Gastrocnemius medialis (tissue), 4 donors: ENCODE measurements at regions of chr7 and their contacts with region 1.

Region 1: GRCh38 chr7:158976849-158977593 is 120.7 kb downstream of the DYNC2I1 start:
- DNase-seq: peak; percentile 34 to 58
- ATAC-seq: peak; percentile 64 to 81
- H3K4me3 ChIP-seq: peak overlapping the region; percentile 27 to 49 (median 36)
- H3K27ac ChIP-seq: peak overlapping the region in 1 of 4 donors; percentile 43
- H3K4me1 ChIP-seq: peaks cover 0 to 4% of the 10 kb centered on the region in 2 donors
- H3K27me3 ChIP-seq: no peaks in the 10 kb centered on the region
- CTCF ChIP-seq: peak; percentile 71 to 80 (median 73)
- POLR2A ChIP-seq: no peak

Region 2: GRCh38 chr7:158646766-158647447 is 330.1 kb before region 1 on chr7:
- in situ Hi-C with region 1: no loop called
- intact Hi-C with region 1: no loop called
- DNase-seq: no peak
- ATAC-seq: no peak
- H3K4me3 ChIP-seq: no peak overlapping the region
- H3K27ac ChIP-seq: no peak overlapping the region
- H3K4me1 ChIP-seq: no peaks in the 10 kb centered on the region
- H3K27me3 ChIP-seq: no peaks in the 10 kb centered on the region
- CTCF ChIP-seq: no peak
- POLR2A ChIP-seq: no peak

Region 3: DNA sequence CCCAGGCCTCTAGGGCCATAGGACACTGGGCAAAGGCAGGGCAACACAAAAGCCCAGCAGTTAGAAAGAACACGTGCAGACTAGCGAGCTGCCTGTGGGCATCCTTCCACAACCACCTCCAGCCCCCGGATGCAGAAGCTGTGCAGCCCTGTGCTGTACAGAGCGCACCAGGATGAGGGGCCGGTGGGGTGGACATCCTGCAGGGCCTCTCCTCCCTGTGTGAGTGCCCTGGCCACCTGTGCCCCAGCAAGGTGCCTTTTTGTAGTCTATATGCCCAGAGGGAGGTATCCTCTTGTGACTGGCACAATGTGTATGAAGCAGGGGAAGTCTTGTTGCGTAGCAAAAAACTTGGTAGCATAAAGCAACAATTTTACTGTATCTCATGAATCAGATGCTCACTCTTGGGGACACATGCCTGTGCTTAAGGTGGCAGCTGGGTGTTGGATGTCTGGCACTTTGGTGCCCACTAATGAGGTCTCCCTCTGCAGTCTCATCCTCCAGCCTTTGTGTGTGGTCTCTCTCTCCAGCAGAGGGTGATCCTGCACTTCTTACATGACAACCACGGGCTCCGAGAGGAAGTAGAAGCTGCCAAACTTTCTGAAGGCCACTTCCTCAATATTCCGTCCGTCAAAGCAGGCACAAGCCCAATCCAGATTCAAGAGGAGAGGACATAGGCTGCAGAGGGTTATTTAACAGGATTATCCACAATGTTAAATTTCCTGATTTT is 281.1 kb before region 1 on chr7:
- in situ Hi-C with region 1: loop called in 1 of 4 experiments (anchors 10 kb)
- intact Hi-C with region 1: loop called (anchors 2 kb)
- DNase-seq: peak; percentile 30 to 69
- ATAC-seq: peak; percentile 60 to 92
- H3K4me3 ChIP-seq: peak overlapping the region in 1 of 4 donors; percentile 33
- H3K27ac ChIP-seq: peak overlapping the region in 1 of 4 donors; percentile 17
- H3K4me1 ChIP-seq: no peaks in the 10 kb centered on the region
- H3K27me3 ChIP-seq: no peaks in the 10 kb centered on the region
- CTCF ChIP-seq: peak in 4 of 5 experiments; percentile 26 to 56 (median 30)
- POLR2A ChIP-seq: no peak

Region 4: GRCh38 chr7:159154243-159154642 is 177.2 kb after region 1 on chr7:
- in situ Hi-C with region 1: no loop called
- intact Hi-C with region 1: no loop called
- DNase-seq: no peak
- ATAC-seq: no peak
- H3K4me3 ChIP-seq: no peak overlapping the region
- H3K27ac ChIP-seq: no peak overlapping the region
- H3K4me1 ChIP-seq: no peaks in the 10 kb centered on the region
- H3K27me3 ChIP-seq: no peaks in the 10 kb centered on the region
- CTCF ChIP-seq: peak in 1 of 5 experiments; percentile 43
- POLR2A ChIP-seq: no peak